ENCODE measurements at regions of chr11 and their contacts with region 1.

Region 1: GRCh38 chr11:35735903-35736302 is 73.3 kb downstream of the TRIM44 start:
- DNase-seq: peak; percentile 78
- H3K4me3 ChIP-seq: no peak overlapping the region
- H3K27ac ChIP-seq: peak overlapping the region; percentile 73
- H3K4me1 ChIP-seq: peaks cover 25% of the 10 kb centered on the region
- H3K27me3 ChIP-seq: no peaks in the 10 kb centered on the region
- CTCF ChIP-seq: no peak
- POLR2A ChIP-seq: no peak

Region 2: GRCh38 chr11:35780951-35781860 is 45.3 kb after region 1 on chr11:
- CTCF ChIA-PET with region 1: no interaction called
- POLR2A ChIA-PET with region 1: no interaction called
- dilution Hi-C with region 1: no loop called
- intact Hi-C with region 1: no loop called
- DNase-seq: no peak
- H3K4me3 ChIP-seq: no peak overlapping the region
- H3K27ac ChIP-seq: no peak overlapping the region
- H3K4me1 ChIP-seq: peaks cover 13% of the 10 kb centered on the region
- H3K27me3 ChIP-seq: no peaks in the 10 kb centered on the region
- CTCF ChIP-seq: no peak
- POLR2A ChIP-seq: no peak

Region 3: GRCh38 chr11:35794850-35795249 is 58.9 kb after region 1 on chr11:
- CTCF ChIA-PET with region 1: interaction called, 3 read pairs
- POLR2A ChIA-PET with region 1: no interaction called
- dilution Hi-C with region 1: no loop called
- intact Hi-C with region 1: loop called (anchors 5 kb)
- DNase-seq: no peak
- H3K4me3 ChIP-seq: no peak overlapping the region
- H3K27ac ChIP-seq: no peak overlapping the region
- H3K4me1 ChIP-seq: peaks cover 45% of the 10 kb centered on the region
- H3K27me3 ChIP-seq: no peaks in the 10 kb centered on the region
- CTCF ChIP-seq: no peak
- POLR2A ChIP-seq: no peak